CD4-positive, alpha-beta memory T cell (primary cell): ENCODE measurements at regions of chr1 and their contacts with region 1.

Region 1: GRCh38 chr1:58783993-58784757 is at the start of gene JUN:
- DNase-seq: peak; percentile 98 to 100 (median 99)
- H3K4me3 ChIP-seq: peak within 1 kb of the TSS; percentile 76 to 96
- H3K4me3 Mint-ChIP-seq: peak within 1 kb of the TSS; percentile 87 to 98 (median 92)
- H3K27ac ChIP-seq: peak within 1 kb of the TSS; percentile 99
- H3K27ac Mint-ChIP-seq: peak within 1 kb of the TSS; percentile 97 to 100 (median 99)
- H3K4me1 ChIP-seq: peaks cover 31% of the 10 kb centered on the region
- H3K4me1 Mint-ChIP-seq: peaks cover 19 to 49% (median 29%) of the 10 kb centered on the region in 4 donors
- H3K27me3 ChIP-seq: no peaks in the 10 kb centered on the region
- H3K27me3 Mint-ChIP-seq: peaks cover 3 to 5% of the 10 kb centered on the region in 2 donors
- total RNA-seq, gene JUN: 19.0 TPM

Region 2: GRCh38 chr1:58664881-58665280 is 119.3 kb before region 1 on chr1:
- CTCF ChIA-PET with region 1: no interaction called
- POLR2A ChIA-PET with region 1: no interaction called
- intact Hi-C with region 1: no loop called
- DNase-seq: no peak
- H3K4me3 ChIP-seq: no peak overlapping the region
- H3K4me3 Mint-ChIP-seq: no peak overlapping the region
- H3K27ac ChIP-seq: no peak overlapping the region
- H3K27ac Mint-ChIP-seq: peak overlapping the region in 2 of 7 donors; percentile 66 to 80
- H3K4me1 ChIP-seq: no peaks in the 10 kb centered on the region
- H3K4me1 Mint-ChIP-seq: peaks cover 0 to 6% (median 0%) of the 10 kb centered on the region in 4 donors
- H3K27me3 ChIP-seq: no peaks in the 10 kb centered on the region
- H3K27me3 Mint-ChIP-seq: no peaks in the 10 kb centered on the region

Region 3: DNA sequence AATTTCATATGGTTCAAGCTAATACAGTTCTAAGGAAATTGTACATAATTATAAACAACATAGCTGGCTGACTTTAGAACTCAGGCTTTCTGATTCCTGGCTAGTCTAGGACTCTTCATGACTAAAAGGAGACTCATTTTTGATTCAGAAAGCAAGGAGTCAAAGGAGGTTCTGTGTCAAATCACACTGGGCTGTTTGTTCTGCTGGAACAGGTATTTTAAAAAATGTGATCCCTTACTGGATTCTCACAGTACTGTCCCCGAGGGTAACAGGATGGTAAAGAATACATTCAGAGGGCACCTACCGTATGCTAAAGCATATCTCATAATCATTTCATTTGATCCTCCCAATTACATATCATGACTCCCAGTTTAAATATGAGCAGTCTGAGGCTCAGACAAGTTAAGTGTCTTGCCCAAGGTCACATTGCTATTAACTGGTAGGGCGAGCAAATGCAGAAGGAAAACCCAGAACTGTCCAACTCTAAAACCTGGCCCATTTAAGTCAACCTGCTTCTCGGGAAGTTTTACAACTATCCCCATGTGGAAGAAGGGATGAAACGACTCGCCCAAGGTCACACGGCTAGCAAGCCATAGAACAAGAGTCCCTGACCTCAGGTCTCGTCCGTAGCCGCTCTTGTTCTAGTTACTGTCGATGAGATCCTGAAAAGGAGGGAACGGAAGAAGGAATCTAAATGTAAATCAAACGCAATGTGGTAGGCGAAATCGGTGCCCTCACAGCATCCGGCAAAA is 85.0 kb before region 1 on chr1:
- CTCF ChIA-PET with region 1: no interaction called
- POLR2A ChIA-PET with region 1: interaction called, 9 read pairs
- intact Hi-C with region 1: loop called (anchors 1 kb)
- DNase-seq: no peak
- H3K4me3 ChIP-seq: peak overlapping the region; percentile 85 to 89
- H3K4me3 Mint-ChIP-seq: peak overlapping the region; percentile 97 to 100 (median 98)
- H3K27ac ChIP-seq: peak overlapping the region; percentile 95
- H3K27ac Mint-ChIP-seq: peak overlapping the region; percentile 92 to 100 (median 99)
- H3K4me1 ChIP-seq: peaks cover 28% of the 10 kb centered on the region
- H3K4me1 Mint-ChIP-seq: peaks cover 15 to 28% (median 18%) of the 10 kb centered on the region in 4 donors
- H3K27me3 ChIP-seq: no peaks in the 10 kb centered on the region
- H3K27me3 Mint-ChIP-seq: no peaks in the 10 kb centered on the region

Region 4: DNA sequence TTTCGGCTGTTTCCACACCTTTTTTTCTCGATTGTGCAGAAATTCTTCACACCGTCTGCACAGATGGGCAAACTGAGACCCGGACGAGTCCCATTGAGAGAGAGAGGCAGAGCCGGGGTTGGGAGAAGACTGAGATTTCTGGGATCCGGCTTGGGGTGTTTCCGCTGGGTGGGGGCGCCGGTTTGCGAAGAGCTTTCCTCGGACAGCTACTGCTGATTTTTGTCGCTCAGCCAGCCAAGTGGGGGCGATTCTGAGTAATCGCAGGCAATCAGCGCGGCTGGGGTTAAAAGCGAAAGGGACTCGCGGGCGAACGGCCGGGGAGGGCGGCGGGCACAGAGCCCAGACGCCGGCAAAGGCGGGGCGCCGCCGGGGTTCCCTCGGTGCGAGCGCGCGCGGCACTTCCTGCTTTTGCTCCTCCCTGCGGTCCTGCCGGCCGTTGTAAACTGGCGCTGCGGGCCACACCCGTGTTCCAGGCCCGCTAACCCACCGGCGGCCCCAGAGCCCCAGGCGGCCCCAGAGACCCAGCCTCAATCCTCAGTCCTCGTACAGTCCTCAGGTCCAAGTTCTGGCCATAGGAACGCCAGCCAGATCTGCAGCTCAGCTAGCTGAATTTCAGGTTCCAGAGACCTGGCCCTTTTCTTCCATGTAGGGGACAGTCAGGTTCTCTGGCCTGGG is 32.0 kb after region 1 on chr1:
- CTCF ChIA-PET with region 1: interaction called, 9 read pairs
- POLR2A ChIA-PET with region 1: interaction called, 91 read pairs
- intact Hi-C with region 1: loop called (anchors 1 kb)
- DNase-seq: peak; percentile 72 to 85 (median 77)
- H3K4me3 ChIP-seq: peak overlapping the region; percentile 75 to 85
- H3K4me3 Mint-ChIP-seq: peak overlapping the region; percentile 89 to 96 (median 93)
- H3K27ac ChIP-seq: peak overlapping the region; percentile 76
- H3K27ac Mint-ChIP-seq: peak overlapping the region; percentile 92 to 96 (median 95)
- H3K4me1 ChIP-seq: peaks cover 51% of the 10 kb centered on the region
- H3K4me1 Mint-ChIP-seq: peaks cover 34 to 55% (median 41%) of the 10 kb centered on the region in 4 donors
- H3K27me3 ChIP-seq: no peaks in the 10 kb centered on the region
- H3K27me3 Mint-ChIP-seq: no peaks in the 10 kb centered on the region

Region 5: DNA sequence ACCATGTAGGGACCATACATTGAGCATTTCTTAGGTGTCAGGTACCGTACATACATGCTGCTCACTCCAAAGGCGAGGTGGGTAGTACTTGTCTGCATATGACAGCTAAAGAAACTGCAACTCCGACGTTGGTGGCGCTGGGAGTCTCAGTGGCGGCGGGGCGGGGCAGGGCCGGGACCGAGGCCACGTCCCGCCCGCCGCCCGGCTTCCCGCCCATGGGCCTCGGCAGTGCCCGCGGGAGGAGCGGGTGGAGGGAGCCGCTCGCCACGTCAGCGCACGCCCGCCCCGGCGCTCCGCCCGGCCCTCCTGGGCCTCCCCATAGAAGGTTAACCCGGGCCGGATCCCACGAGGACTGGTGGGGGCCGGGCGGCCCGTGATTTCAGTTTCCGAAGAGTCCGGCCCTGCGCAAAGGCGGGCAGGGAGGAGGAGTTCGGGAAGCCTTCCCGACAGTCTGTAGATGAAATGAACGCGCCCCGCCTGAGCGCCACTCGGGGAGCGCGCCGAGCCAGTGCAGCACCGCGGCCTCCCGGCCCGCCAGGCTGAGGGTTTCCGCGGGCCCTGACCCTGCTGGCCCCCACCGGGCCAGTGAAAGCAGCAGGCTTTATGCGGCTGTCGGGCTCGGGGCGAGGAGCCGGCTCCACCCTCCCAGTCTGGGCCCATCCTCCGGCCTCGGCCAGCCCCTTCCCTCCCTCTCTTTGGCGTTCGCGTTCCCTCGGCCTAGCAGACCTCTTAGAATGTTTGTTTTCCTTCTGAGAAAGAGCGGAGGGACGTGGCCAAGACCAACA is 119.5 kb after region 1 on chr1:
- CTCF ChIA-PET with region 1: no interaction called
- POLR2A ChIA-PET with region 1: interaction called, 9 read pairs
- intact Hi-C with region 1: loop called (anchors 1 kb)
- DNase-seq: peak; percentile 49 to 69 (median 58)
- H3K4me3 ChIP-seq: peak overlapping the region; percentile 39 to 56
- H3K4me3 Mint-ChIP-seq: peak overlapping the region; percentile 74 to 83 (median 81)
- H3K27ac ChIP-seq: peak overlapping the region; percentile 29
- H3K27ac Mint-ChIP-seq: peak overlapping the region; percentile 16 to 90 (median 61)
- H3K4me1 ChIP-seq: peaks cover 13% of the 10 kb centered on the region
- H3K4me1 Mint-ChIP-seq: peaks cover 9 to 19% (median 13%) of the 10 kb centered on the region in 4 donors
- H3K27me3 ChIP-seq: no peaks in the 10 kb centered on the region
- H3K27me3 Mint-ChIP-seq: no peaks in the 10 kb centered on the region

Region 6: DNA sequence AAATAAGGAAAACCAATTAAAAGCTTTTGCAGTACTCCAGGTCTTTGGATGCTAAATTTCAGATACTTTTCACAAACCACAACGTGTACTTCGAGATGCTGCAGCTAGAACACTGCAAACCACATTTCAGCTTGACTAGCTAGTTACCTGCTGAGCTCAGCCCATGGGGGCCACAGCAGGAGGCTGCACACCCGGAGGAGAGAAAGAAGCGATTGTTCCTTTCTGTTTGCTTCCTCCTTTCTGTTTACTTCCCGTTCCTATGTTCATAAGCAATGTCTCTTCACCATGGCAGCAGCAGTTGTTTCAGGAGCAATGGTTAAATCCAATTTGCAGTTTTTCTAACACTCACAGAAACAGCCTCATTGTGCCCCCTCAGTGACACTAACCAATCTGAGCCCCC is 287.1 kb after region 1 on chr1:
- CTCF ChIA-PET with region 1: interaction called, 9 read pairs
- POLR2A ChIA-PET with region 1: interaction called, 23 read pairs
- intact Hi-C with region 1: loop called (anchors 1 kb)
- DNase-seq: peak in 1 of 5 donors; percentile 5
- H3K4me3 ChIP-seq: no peak overlapping the region
- H3K4me3 Mint-ChIP-seq: peak overlapping the region in 7 of 8 donors; percentile 47 to 76 (median 55)
- H3K27ac ChIP-seq: no peak overlapping the region
- H3K27ac Mint-ChIP-seq: peak overlapping the region; percentile 25 to 84 (median 64)
- H3K4me1 ChIP-seq: peaks cover 23% of the 10 kb centered on the region
- H3K4me1 Mint-ChIP-seq: peaks cover 16 to 30% (median 22%) of the 10 kb centered on the region in 4 donors
- H3K27me3 ChIP-seq: no peaks in the 10 kb centered on the region
- H3K27me3 Mint-ChIP-seq: no peaks in the 10 kb centered on the region

Region 7: DNA sequence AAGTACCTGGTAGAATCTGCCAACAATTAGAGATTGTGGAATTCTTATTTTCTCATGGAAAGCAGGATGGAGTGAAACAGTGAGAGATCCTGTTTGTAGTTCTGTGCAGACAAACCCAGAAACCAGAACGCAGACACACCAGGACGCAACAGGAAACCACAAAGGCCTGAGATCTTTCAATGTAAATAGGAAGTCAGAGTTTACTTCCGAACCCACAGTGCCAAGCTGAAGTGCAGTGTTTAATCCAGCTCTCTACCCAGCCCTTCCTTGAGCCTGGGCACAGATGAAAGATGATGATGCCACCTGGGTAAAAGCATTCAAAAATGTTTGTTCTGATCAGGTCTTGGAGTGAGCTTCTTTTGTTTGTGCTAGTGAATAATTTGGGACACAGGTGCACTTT is 786.3 kb after region 1 on chr1:
- CTCF ChIA-PET with region 1: interaction called, 3 read pairs
- POLR2A ChIA-PET with region 1: interaction called, 4 read pairs
- intact Hi-C with region 1: loop called (anchors 2 kb)
- DNase-seq: peak; percentile 35 to 55 (median 46)
- H3K4me3 ChIP-seq: peak overlapping the region in 1 of 2 donors; percentile 4
- H3K4me3 Mint-ChIP-seq: peak overlapping the region in 7 of 8 donors; percentile 22 to 77 (median 68)
- H3K27ac ChIP-seq: no peak overlapping the region
- H3K27ac Mint-ChIP-seq: no peak overlapping the region
- H3K4me1 ChIP-seq: peaks cover 31% of the 10 kb centered on the region
- H3K4me1 Mint-ChIP-seq: peaks cover 25 to 31% (median 28%) of the 10 kb centered on the region in 4 donors
- H3K27me3 ChIP-seq: no peaks in the 10 kb centered on the region
- H3K27me3 Mint-ChIP-seq: peaks cover 0 to 3% of the 10 kb centered on the region in 2 donors